Natural killer cell (primary cell): ENCODE measurements at regions of chr2 and their contacts with region 1.

Region 1: DNA sequence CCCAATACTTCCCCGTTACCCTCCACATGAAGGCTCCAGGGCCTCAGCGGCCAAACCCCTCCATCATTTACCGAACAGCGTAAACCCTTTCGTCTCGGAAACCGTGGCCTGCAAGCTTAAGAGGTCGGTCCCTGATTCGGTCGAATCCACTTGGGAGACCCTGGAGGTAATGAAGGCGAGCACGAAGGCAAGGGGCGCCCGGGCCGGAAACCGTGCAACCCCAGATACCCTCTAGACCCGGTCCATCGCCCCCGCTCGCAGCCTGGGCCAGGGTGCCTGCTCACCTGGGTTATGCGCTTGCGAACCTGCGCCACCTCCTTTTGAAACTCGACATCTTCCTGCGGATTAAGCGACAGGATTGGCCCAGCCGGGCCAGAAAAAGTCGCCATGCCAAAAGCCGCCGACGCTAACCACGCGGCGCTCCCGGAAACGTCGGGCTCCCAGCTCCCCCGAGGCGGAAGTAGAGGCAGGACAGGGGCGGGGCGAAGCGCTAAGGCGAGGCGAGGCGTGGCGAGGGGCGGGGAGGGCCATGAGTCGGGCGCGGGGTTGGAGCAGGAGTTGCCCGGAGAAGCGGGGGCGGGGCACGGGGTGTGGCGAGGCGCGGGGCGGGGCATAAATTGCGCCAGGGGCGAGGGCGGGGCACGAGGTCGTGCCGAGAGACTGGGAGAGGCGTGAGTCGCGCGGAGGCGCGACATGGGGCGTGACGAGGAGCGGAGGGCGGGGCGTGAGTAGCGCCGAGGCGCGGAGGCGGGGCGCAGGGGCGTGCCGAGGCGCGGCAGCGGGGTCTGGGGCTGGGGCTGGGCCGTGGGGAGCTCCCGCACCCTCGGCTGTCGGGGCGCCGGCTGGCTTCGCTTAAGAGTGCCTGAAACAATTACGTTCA is at the start of gene NIFK:
- DNase-seq: peak; percentile 98 to 99
- ATAC-seq: peak; percentile 89 to 97 (median 90)
- H3K4me3 ChIP-seq: peak within 1 kb of the TSS; percentile 85
- H3K4me3 Mint-ChIP-seq: peak within 1 kb of the TSS; percentile 99
- H3K27ac ChIP-seq: peak within 1 kb of the TSS; percentile 76
- H3K27ac Mint-ChIP-seq: peak within 1 kb of the TSS; percentile 96 to 98
- H3K4me1 ChIP-seq: peaks cover 23% of the 10 kb centered on the region
- H3K4me1 Mint-ChIP-seq: peaks cover 35 to 48% of the 10 kb centered on the region in 2 donors
- H3K27me3 ChIP-seq: no peaks in the 10 kb centered on the region
- H3K27me3 Mint-ChIP-seq: no peaks in the 10 kb centered on the region
- CTCF ChIP-seq: no peak
- total RNA-seq, gene NIFK: 32.7 to 37.7 (median 33.5) TPM

Region 2: DNA sequence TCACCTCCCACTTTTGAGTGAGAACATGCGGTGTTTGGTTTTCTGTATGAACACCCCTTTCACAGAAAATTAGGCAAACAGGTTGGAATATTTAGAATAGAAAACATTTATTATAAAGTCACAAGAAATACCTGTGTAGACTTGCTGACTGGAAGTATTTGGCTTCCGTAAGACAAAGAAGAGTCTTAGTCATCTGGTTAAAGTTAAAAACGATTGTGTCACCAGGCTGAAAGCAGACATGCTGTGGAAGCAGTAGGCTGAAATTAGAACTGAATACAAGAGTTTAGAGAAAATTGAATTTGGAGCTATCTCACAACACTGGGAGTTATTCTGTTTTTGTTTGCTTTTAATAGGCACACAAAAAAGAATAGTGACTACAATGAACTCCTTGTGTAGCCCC is 71.2 kb before region 1 on chr2:
- intact Hi-C with region 1: no loop called
- DNase-seq: no peak
- ATAC-seq: no peak
- H3K4me3 ChIP-seq: no peak overlapping the region
- H3K4me3 Mint-ChIP-seq: no peak overlapping the region
- H3K27ac ChIP-seq: no peak overlapping the region
- H3K27ac Mint-ChIP-seq: no peak overlapping the region
- H3K4me1 ChIP-seq: no peaks in the 10 kb centered on the region
- H3K4me1 Mint-ChIP-seq: no peaks in the 10 kb centered on the region
- H3K27me3 ChIP-seq: no peaks in the 10 kb centered on the region
- H3K27me3 Mint-ChIP-seq: no peaks in the 10 kb centered on the region
- CTCF ChIP-seq: no peak

Region 3: GRCh38 chr2:121755236-121756111 is 18.8 kb after region 1 on chr2 and contains the start of gene TSN:
- intact Hi-C with region 1: loop called (anchors 1 kb)
- DNase-seq: peak; percentile 96 to 99
- ATAC-seq: peak; percentile 97 to 100 (median 98)
- H3K4me3 ChIP-seq: peak within 1 kb of the TSS; percentile 94
- H3K4me3 Mint-ChIP-seq: peak within 1 kb of the TSS; percentile 91
- H3K27ac ChIP-seq: peak within 1 kb of the TSS; percentile 75
- H3K27ac Mint-ChIP-seq: peak within 1 kb of the TSS; percentile 78 to 84
- H3K4me1 ChIP-seq: peaks cover 5% of the 10 kb centered on the region
- H3K4me1 Mint-ChIP-seq: peaks cover 19 to 25% of the 10 kb centered on the region in 2 donors
- H3K27me3 ChIP-seq: no peaks in the 10 kb centered on the region
- H3K27me3 Mint-ChIP-seq: no peaks in the 10 kb centered on the region
- CTCF ChIP-seq: no peak
- total RNA-seq, gene TSN: 54.7 to 66.9 (median 62.5) TPM